PC-3 (cell line): ENCODE measurements at regions of chr15 and their contacts with region 1.

Region 1: GRCh38 chr15:71079208-71080021 is 35.9 kb upstream of the THSD4 start:
- DNase-seq: peak; percentile 95
- ATAC-seq: peak; percentile 89
- H3K4me3 ChIP-seq: peak overlapping the region; percentile 21; the same call in 1 of the 2 replicates
- H3K27ac ChIP-seq: peak overlapping the region; percentile 97
- H3K4me1 ChIP-seq: peaks cover 31% of the 10 kb centered on the region
- H3K27me3 ChIP-seq: no peaks in the 10 kb centered on the region
- CTCF ChIP-seq: no peak

Region 2: GRCh38 chr15:71011503-71012155 is 67.8 kb before region 1 on chr15:
- CTCF ChIA-PET with region 1: no interaction called
- POLR2A ChIA-PET with region 1: no interaction called
- intact Hi-C with region 1: loop called (anchors 5 kb)
- DNase-seq: peak; percentile 82
- ATAC-seq: peak; percentile 87
- H3K4me3 ChIP-seq: no peak overlapping the region
- H3K27ac ChIP-seq: peak overlapping the region; percentile 34
- H3K4me1 ChIP-seq: peaks cover 15% of the 10 kb centered on the region
- H3K27me3 ChIP-seq: no peaks in the 10 kb centered on the region
- CTCF ChIP-seq: peak; percentile 93

Region 3: GRCh38 chr15:71103102-71103676 is 23.8 kb after region 1 on chr15:
- CTCF ChIA-PET with region 1: interaction called, 14 read pairs
- POLR2A ChIA-PET with region 1: no interaction called
- intact Hi-C with region 1: no loop called
- DNase-seq: peak; percentile 57
- ATAC-seq: peak; percentile 84
- H3K4me3 ChIP-seq: no peak overlapping the region
- H3K27ac ChIP-seq: no peak overlapping the region
- H3K4me1 ChIP-seq: peaks cover 14% of the 10 kb centered on the region
- H3K27me3 ChIP-seq: no peaks in the 10 kb centered on the region
- CTCF ChIP-seq: peak; percentile 66

Region 4: GRCh38 chr15:71125831-71126453 is 46.5 kb after region 1 on chr15:
- CTCF ChIA-PET with region 1: no interaction called
- POLR2A ChIA-PET with region 1: no interaction called
- intact Hi-C with region 1: no loop called
- DNase-seq: no peak
- ATAC-seq: no peak
- H3K4me3 ChIP-seq: no peak overlapping the region
- H3K27ac ChIP-seq: no peak overlapping the region
- H3K4me1 ChIP-seq: peaks cover 22% of the 10 kb centered on the region
- H3K27me3 ChIP-seq: no peaks in the 10 kb centered on the region
- CTCF ChIP-seq: no peak; the same call in 1 of the 2 replicates